Activated B cell treated with CpG ODN at 0.5 μM for 24 hours (primary cell): ENCODE measurements at regions of chr2 and their contacts with region 1.

Region 1: GRCh38 chr2:70086838-70087701 is at the start of gene PCBP1:
- DNase-seq: peak; percentile 96
- ATAC-seq: peak; percentile 54
- H3K4me3 Mint-ChIP-seq: peak within 1 kb of the TSS; percentile 96
- H3K27ac Mint-ChIP-seq: peak within 1 kb of the TSS; percentile 100
- H3K4me1 Mint-ChIP-seq: peaks cover 70% of the 10 kb centered on the region
- H3K27me3 Mint-ChIP-seq: no peaks in the 10 kb centered on the region
- CTCF ChIP-seq: no peak
- total RNA-seq, gene PCBP1: 370 and 379 TPM in 2 replicates

Region 2: DNA sequence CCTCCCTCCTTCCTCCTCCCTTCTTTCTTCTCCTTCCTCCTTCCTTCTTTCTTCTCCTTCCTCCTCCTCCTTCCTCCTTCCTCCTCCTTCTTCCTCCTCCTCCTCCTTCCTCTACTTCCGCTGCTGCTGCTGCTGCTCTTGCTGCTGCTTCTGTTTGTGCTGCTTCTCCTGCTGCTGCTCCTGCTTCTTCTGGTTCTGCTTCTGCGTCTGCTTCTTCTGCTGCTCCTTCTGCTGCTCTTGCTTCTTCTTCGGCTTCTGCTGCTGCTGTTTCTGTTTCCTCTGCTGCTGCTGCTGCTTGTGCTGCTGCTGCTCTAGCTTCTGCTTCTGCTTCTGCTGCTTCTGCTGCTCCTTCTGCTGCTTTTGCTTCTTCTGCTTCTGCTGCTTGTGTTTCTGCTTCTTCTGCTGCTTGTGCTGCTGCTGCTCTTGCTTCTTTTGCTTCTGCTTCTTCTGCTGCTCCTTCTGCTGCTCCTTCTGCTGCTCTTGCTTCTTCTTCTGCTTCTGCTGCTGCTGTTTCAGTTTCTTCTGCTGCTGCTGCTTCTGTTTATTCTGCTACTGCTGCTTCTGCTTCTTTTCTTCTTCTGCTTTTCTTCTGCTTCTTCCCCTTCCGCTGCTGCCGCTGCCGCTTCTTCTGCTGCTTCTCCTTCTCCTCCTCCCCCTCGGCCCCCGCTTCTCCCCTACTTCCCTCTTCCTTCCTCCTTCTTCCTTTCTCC is 184.7 kb before region 1 on chr2:
- CTCF ChIA-PET with region 1: no interaction called
- POLR2A ChIA-PET with region 1: no interaction called
- intact Hi-C with region 1: no loop called
- DNase-seq: no peak
- ATAC-seq: peak; percentile 79
- H3K4me3 Mint-ChIP-seq: peak overlapping the region; percentile 76
- H3K27ac Mint-ChIP-seq: peak overlapping the region; percentile 92
- H3K4me1 Mint-ChIP-seq: peaks cover 41% of the 10 kb centered on the region
- H3K27me3 Mint-ChIP-seq: no peaks in the 10 kb centered on the region
- CTCF ChIP-seq: no peak

Region 3: GRCh38 chr2:70070541-70071268 is 16.4 kb before region 1 on chr2:
- CTCF ChIA-PET with region 1: interaction called, 8 read pairs
- POLR2A ChIA-PET with region 1: interaction called, 112 read pairs
- intact Hi-C with region 1: loop called (anchors 1 kb)
- DNase-seq: no peak
- ATAC-seq: peak; percentile 92
- H3K4me3 Mint-ChIP-seq: peak overlapping the region; percentile 64
- H3K27ac Mint-ChIP-seq: peak overlapping the region; percentile 83
- H3K4me1 Mint-ChIP-seq: peaks cover 32% of the 10 kb centered on the region
- H3K27me3 Mint-ChIP-seq: no peaks in the 10 kb centered on the region
- CTCF ChIP-seq: peak; percentile 33

Region 4: DNA sequence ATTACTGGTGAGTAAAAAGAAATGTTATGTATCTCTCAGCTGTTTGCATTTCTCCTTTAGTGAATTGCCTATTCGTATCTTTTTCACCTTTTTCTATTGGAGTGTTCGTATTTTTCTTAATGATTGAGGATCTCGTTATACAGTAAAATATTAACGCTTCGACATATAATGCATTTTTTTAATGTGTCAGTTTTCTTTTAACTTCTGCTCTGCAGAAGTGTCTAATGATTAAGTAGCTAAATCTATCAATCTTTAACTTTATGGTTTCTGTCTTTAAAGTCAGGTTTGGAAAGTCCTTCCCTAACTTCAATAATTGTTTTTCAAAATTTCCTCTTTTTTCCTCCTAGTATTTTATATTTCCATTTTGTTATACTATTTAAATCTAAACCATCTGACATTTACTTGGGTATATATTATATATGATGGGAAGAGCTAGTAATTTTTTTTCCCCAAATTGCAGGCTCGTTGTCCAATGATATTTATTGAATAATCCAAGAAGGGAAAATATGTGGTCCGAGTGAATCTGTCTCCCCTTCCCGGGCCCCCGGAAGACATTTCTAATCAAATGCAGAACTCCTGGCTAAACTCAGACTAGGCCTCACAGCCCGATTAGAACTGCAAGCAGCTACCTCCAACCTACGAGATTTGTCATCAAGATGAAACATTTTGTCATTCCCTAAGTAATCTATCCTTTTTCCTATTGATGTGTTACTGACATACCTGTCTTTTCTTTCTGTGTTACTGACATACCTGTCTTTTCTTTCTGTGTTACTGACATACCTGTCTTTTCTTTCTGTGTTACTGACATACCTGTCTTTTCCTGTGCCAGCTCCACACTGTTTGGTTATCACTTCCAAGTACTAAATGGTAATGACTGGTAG is 17.4 kb after region 1 on chr2:
- CTCF ChIA-PET with region 1: interaction called, 5 read pairs
- POLR2A ChIA-PET with region 1: interaction called, 336 read pairs
- intact Hi-C with region 1: loop called (anchors 1 kb)
- DNase-seq: no peak
- ATAC-seq: no peak
- H3K4me3 Mint-ChIP-seq: peak overlapping the region; percentile 80
- H3K27ac Mint-ChIP-seq: peak overlapping the region; percentile 94
- H3K4me1 Mint-ChIP-seq: peaks cover 55% of the 10 kb centered on the region
- H3K27me3 Mint-ChIP-seq: no peaks in the 10 kb centered on the region
- CTCF ChIP-seq: no peak